AG04450 (cell line): ENCODE measurements at regions of chr2 and their contacts with region 1.

Region 1: DNA sequence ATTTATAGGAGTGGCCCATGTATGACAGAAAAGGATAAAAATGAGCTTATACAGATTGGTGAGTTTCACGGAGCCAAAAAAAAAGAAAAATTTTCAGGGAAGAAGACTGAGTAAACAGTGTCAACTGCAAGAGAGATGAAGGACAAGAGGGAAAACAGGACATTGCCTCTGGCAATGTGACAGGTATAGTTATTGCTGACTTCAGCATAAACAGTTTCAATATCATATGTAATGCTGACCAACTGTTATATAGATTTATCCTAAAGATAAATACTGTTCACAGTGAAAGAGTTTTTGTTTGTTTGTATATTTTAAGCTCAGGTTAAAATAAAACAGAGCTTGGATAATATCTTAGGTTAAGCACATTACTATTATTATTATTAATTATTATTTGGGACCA is 98.0 kb upstream of the FSIP2 start:
- DNase-seq: no peak
- H3K4me3 ChIP-seq: no peak overlapping the region
- H3K27ac ChIP-seq: no peak overlapping the region
- H3K27me3 ChIP-seq: no peaks in the 10 kb centered on the region
- CTCF ChIP-seq: no peak

Region 2: GRCh38 chr2:185628985-185629384 is 11.6 kb before region 1 on chr2:
- CTCF ChIA-PET with region 1: interaction called, 10 read pairs
- POLR2A ChIA-PET with region 1: no interaction called
- DNase-seq: no peak
- H3K4me3 ChIP-seq: no peak overlapping the region
- H3K27ac ChIP-seq: no peak overlapping the region
- H3K27me3 ChIP-seq: no peaks in the 10 kb centered on the region
- CTCF ChIP-seq: no peak

Region 3: GRCh38 chr2:185771396-185771795 is 130.8 kb after region 1 on chr2:
- CTCF ChIA-PET with region 1: no interaction called
- POLR2A ChIA-PET with region 1: no interaction called
- DNase-seq: no peak
- H3K4me3 ChIP-seq: no peak overlapping the region
- H3K27ac ChIP-seq: no peak overlapping the region
- H3K27me3 ChIP-seq: no peaks in the 10 kb centered on the region
- CTCF ChIP-seq: no peak